ENCODE measurements at regions of chr20 and their contacts with region 1.

Region 1: DNA sequence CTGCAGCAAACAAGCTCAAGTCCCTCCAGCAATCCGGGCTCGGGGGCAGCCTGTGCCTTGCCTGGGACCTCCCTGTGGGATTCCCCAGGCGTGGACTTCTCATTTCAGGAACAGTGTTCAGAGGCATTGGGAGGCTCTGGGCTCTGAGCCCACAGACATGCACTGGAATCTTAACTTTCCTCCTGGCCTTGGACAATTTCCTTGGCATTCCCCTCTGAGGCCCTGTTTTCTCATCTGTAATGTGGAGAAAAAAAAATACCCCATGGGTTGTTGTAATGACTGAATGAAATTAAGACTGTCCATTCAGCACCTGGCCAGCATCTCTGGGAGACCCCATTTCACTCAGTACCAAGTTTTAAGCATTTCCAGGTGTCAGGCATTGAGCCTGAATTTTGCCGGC is 17.6 kb downstream of the BPIFB4 start:
- DNase-seq: peak in 1 of 2 donors; percentile 28
- H3K4me3 ChIP-seq: no peak overlapping the region
- H3K27ac ChIP-seq: no peak overlapping the region
- H3K4me1 ChIP-seq: peaks cover 0 to 10% (median 0%) of the 10 kb centered on the region in 4 donors
- H3K27me3 ChIP-seq: no peaks in the 10 kb centered on the region
- CTCF ChIP-seq: no peak
- EP300 ChIP-seq: no peak
- POLR2A ChIP-seq: no peak

Region 2: DNA sequence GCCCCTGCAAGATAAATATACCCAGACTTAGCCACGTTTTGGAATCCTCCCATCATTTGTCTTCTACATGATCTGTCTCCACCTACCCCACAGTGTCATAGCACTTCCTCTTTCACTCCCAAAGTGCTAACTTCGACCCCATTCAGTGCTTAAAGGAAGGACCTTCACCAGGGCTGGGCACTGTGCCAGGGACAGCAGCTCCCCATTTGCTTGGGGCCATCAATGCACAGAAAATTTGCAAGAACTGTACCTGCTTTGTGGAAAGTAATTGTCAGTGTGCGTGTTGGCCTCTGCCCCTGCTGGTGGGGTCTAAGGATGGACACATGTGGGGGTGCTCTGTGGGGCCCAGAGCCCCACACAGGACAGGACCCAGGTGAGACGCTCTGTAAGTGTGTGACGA is 65.8 kb after region 1 on chr20:
- intact Hi-C with region 1: no loop called
- DNase-seq: peak in 1 of 2 donors; percentile 21
- H3K4me3 ChIP-seq: no peak overlapping the region
- H3K27ac ChIP-seq: no peak overlapping the region
- H3K4me1 ChIP-seq: no peaks in the 10 kb centered on the region
- H3K27me3 ChIP-seq: peaks cover 0 to 8% (median 0%) of the 10 kb centered on the region in 3 donors
- CTCF ChIP-seq: no peak
- EP300 ChIP-seq: no peak
- POLR2A ChIP-seq: no peak

Region 3: DNA sequence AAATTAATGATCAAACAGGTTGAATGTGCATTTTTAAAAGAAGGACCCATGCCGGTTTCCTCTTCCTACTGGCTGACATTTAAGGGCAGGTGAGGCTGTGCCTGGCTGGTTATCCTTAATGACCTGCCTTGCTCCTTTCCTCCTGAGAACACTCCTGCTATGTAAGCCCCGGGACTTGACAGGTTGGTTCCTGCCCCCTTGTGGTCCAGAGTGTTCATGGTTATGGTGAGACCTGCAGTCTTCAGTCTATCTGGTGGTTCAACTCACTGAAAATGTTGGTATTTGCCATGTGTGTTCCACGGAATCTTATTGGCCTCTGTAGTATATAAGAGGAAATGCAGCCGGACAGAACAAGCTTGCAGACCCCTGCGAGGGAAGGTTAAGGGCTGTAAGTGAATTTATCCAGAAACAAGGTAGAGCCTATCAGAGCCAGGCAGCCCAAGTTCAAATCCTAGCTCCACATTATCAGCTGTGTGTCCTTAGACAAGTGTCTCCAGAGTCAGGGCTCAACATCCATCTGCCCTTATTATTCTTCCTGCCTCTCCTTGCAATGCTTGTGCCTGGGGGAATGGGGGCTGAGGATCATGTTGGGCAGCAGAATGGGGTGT is 114.9 kb after region 1 on chr20:
- intact Hi-C with region 1: loop called (anchors 10 kb)
- DNase-seq: peak; percentile 82 to 83
- H3K4me3 ChIP-seq: no peak overlapping the region
- H3K27ac ChIP-seq: no peak overlapping the region
- H3K4me1 ChIP-seq: peaks cover 0 to 4% (median 0%) of the 10 kb centered on the region in 4 donors
- H3K27me3 ChIP-seq: peaks cover 0 to 47% (median 0%) of the 10 kb centered on the region in 3 donors
- CTCF ChIP-seq: peak in 4 of 7 experiments; percentile 7 to 74 (median 44)
- EP300 ChIP-seq: no peak
- POLR2A ChIP-seq: no peak

Measured in stomach (tissue), 19 donors.